ENCODE measurements at regions of chr2 and their contacts with region 1.

Region 1: GRCh38 chr2:113756355-113757137 is at the start of gene SLC35F5:
- DNase-seq: peak; percentile 92
- H3K4me3 Mint-ChIP-seq: peak within 1 kb of the TSS; percentile 91
- H3K27ac Mint-ChIP-seq: peak within 1 kb of the TSS; percentile 99
- H3K4me1 Mint-ChIP-seq: peaks cover 29% of the 10 kb centered on the region
- H3K27me3 Mint-ChIP-seq: peaks cover 3% of the 10 kb centered on the region
- total RNA-seq, gene SLC35F5: 39.6 and 41.8 TPM in 2 replicates

Region 2: GRCh38 chr2:113291191-113291590 is 465.4 kb before region 1 on chr2:
- intact Hi-C with region 1: no loop called
- DNase-seq: no peak
- H3K4me3 Mint-ChIP-seq: no peak overlapping the region
- H3K27ac Mint-ChIP-seq: no peak overlapping the region
- H3K4me1 Mint-ChIP-seq: no peaks in the 10 kb centered on the region
- H3K27me3 Mint-ChIP-seq: peaks cover 57% of the 10 kb centered on the region

Region 3: DNA sequence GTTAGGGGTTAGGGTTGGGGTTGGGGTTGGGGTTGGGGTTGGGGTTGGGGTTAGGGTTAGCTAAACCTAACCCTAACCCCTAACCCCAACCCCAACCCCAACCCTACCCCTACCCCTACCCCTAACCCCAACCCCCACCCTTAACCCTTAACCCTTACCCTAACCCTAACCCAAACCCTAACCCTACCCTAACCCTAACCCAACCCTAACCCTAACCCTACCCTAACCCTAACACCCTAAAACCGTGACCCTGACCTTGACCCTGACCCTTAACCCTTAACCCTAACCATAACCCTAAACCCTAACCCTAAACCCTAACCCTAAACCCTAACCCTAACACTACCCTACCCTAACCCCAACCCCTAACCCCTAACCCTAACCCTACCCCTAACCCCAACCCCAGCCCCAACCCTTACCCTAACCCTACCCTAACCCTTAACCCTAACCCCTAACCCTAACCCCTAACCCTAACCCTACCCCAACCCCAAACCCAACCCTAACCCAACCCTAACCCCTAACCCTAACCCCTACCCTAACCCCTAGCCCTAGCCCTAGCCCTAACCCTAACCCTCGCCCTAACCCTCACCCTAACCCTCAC is 153.6 kb before region 1 on chr2:
- intact Hi-C with region 1: loop called (anchors 2 kb)
- DNase-seq: no peak
- H3K4me3 Mint-ChIP-seq: peak overlapping the region; percentile 85
- H3K27ac Mint-ChIP-seq: peak overlapping the region; percentile 93
- H3K4me1 Mint-ChIP-seq: peaks cover 6% of the 10 kb centered on the region
- H3K27me3 Mint-ChIP-seq: no peaks in the 10 kb centered on the region

Region 4: GRCh38 chr2:113692698-113693428 is 63.7 kb before region 1 on chr2:
- intact Hi-C with region 1: loop called (anchors 2 kb)
- DNase-seq: peak; percentile 38
- H3K4me3 Mint-ChIP-seq: peak overlapping the region; percentile 61
- H3K27ac Mint-ChIP-seq: peak overlapping the region; percentile 94
- H3K4me1 Mint-ChIP-seq: peaks cover 49% of the 10 kb centered on the region
- H3K27me3 Mint-ChIP-seq: no peaks in the 10 kb centered on the region

Region 5: DNA sequence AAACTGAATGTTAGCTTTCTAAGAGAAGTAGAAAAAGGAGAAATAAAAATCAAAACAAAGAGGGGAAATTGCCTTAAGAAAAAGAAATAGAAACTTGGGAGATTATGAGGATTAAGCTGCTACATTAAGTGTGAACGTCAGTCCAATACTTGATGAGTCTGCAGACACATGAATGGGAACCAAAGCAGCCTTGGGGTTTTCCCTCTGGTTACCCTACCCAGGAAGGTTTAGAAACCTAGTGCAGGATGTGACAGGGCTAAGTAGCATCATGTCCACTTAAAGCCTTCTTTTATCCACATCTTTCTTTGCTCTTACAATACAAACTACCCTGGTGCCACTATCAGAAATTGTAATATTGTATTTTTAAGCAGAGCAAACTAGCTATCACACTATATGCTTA is 22.4 kb before region 1 on chr2:
- intact Hi-C with region 1: loop called (anchors 2 kb)
- DNase-seq: no peak
- H3K4me3 Mint-ChIP-seq: no peak overlapping the region
- H3K27ac Mint-ChIP-seq: no peak overlapping the region
- H3K4me1 Mint-ChIP-seq: peaks cover 11% of the 10 kb centered on the region
- H3K27me3 Mint-ChIP-seq: no peaks in the 10 kb centered on the region

Region 6: DNA sequence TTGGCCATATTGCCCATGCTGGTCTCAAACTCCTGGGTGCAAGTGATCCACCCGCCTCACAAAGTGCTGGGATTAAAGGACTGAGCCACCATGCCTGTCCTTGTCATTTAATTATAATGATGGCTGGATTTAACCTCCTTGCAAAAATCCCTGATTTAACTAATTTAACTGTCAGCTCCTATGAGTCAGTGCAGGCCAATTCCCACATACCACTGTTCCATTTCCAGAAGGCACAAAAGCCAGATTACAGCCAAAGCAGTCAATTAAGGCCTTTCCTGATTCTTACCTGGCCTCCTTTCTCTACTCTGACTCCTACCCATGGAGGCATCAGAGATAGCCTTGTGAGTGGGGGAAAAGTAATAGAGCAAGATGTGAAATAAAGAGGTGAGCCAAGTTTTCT is 12.2 kb after region 1 on chr2:
- intact Hi-C with region 1: no loop called
- DNase-seq: no peak
- H3K4me3 Mint-ChIP-seq: no peak overlapping the region
- H3K27ac Mint-ChIP-seq: no peak overlapping the region
- H3K4me1 Mint-ChIP-seq: no peaks in the 10 kb centered on the region
- H3K27me3 Mint-ChIP-seq: no peaks in the 10 kb centered on the region

Region 7: GRCh38 chr2:113791697-113792590 is 35.4 kb after region 1 on chr2:
- intact Hi-C with region 1: loop called (anchors 1 kb)
- DNase-seq: no peak
- H3K4me3 Mint-ChIP-seq: peak overlapping the region; percentile 45
- H3K27ac Mint-ChIP-seq: peak overlapping the region; percentile 98
- H3K4me1 Mint-ChIP-seq: peaks cover 24% of the 10 kb centered on the region
- H3K27me3 Mint-ChIP-seq: no peaks in the 10 kb centered on the region

Region 8: GRCh38 chr2:113977660-113978523 is 221.3 kb after region 1 on chr2:
- intact Hi-C with region 1: loop called (anchors 10 kb)
- DNase-seq: no peak
- H3K4me3 Mint-ChIP-seq: no peak overlapping the region
- H3K27ac Mint-ChIP-seq: no peak overlapping the region
- H3K4me1 Mint-ChIP-seq: peaks cover 7% of the 10 kb centered on the region
- H3K27me3 Mint-ChIP-seq: no peaks in the 10 kb centered on the region

Measured in activated T-helper 2 cell treated with anti-CD3 and anti-CD28 coated beads, Interferon-gamma antibody, Interleukin-2, Interleukin-4, amounts not matched to agents 10 μg/mL and 5 μg/mL and 100 μg/mL, durations not matched to agents 14 hours and 24 hours and 36 hours (primary cell).